ENCODE measurements at regions of chrX and their contacts with region 1.

Region 1: DNA sequence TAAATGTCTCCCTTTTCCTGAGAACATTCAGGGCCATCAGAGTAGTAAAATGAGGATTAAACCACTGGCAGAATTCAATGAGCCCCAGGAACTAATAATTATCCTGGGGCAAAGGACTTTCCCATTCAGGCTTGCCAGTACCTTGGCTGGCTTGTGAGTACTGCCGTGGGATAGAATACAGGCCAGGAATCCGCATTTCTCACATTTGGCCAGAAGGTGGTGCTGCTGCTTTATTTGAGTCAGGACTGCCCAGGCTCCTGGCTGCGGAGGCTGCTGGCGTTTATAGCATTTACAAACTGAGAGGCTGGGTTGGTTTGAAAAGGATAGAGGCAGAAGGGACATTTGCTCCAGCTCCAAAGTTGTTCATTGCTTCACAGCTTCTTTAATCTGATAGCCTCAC is 91.4 kb downstream of the RTL9 start:
- DNase-seq: peak; percentile 0 to 66 (median 44)
- ATAC-seq: peak; percentile 49
- H3K4me3 ChIP-seq: no peak overlapping the region
- H3K4me3 Mint-ChIP-seq: no peak overlapping the region
- H3K27ac ChIP-seq: no peak overlapping the region
- H3K27ac Mint-ChIP-seq: no peak overlapping the region
- H3K4me1 ChIP-seq: no peaks in the 10 kb centered on the region
- H3K4me1 Mint-ChIP-seq: no peaks in the 10 kb centered on the region
- H3K27me3 ChIP-seq: no peaks in the 10 kb centered on the region
- H3K27me3 Mint-ChIP-seq: peaks cover 4% of the 10 kb centered on the region
- CTCF ChIP-seq: peak; percentile 43

Region 2: DNA sequence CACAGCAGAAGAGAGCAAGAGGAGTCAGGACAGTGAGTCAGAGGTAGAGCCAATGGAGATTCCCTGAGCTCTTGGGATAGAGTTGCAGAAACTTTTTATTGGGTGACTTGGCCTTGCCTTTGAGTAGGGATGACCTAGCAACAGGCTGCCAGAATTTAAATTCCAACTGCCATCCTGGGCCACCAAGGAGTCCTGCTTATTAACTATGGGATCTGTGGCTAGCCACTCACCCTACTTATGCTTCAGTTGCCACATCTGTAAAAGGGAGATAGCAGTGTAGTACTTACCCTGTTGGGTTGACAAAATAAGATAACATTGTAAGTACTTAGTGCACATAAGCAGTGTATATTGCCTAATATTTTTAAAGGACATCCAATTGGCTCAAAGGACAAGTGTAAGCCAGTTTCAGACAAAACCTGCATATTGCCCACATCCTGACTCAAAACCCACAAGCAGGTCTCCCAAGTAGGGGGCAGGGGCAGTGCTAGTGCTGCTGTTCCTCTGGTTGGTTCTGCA is 490.6 kb before region 1 on chrX:
- CTCF ChIA-PET with region 1: no interaction called
- POLR2A ChIA-PET with region 1: no interaction called
- intact Hi-C with region 1: no loop called
- DNase-seq: no peak
- ATAC-seq: no peak
- H3K4me3 ChIP-seq: no peak overlapping the region
- H3K4me3 Mint-ChIP-seq: no peak overlapping the region
- H3K27ac ChIP-seq: no peak overlapping the region
- H3K27ac Mint-ChIP-seq: no peak overlapping the region
- H3K4me1 ChIP-seq: no peaks in the 10 kb centered on the region
- H3K4me1 Mint-ChIP-seq: peaks cover 7% of the 10 kb centered on the region
- H3K27me3 ChIP-seq: no peaks in the 10 kb centered on the region
- H3K27me3 Mint-ChIP-seq: no peaks in the 10 kb centered on the region
- CTCF ChIP-seq: no peak

Region 3: DNA sequence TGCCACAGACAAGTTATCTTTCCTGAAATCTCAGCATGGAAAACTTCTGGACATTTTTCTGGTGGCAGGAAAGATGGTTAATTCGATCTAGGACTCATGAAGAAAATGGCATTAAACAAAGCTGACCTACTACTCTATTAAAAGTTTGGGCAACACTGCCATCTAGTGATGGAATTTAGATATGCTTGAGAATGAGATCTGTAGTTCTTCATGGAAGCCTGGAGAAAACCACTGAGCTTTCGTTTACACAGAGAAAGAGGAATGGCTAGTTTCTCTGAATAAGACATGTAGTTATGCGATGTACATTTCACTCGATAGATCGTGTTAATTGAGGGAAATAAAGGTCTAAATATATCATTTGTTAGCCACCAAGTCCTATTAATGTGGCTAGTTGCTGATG is 397.3 kb after region 1 on chrX:
- CTCF ChIA-PET with region 1: interaction called, 7 read pairs
- POLR2A ChIA-PET with region 1: no interaction called
- intact Hi-C with region 1: loop called in 1 of 2 experiments (anchors 1 kb)
- DNase-seq: peak in 3 of 9 experiments; percentile 7 to 52 (median 44)
- ATAC-seq: no peak
- H3K4me3 ChIP-seq: no peak overlapping the region
- H3K4me3 Mint-ChIP-seq: no peak overlapping the region
- H3K27ac ChIP-seq: no peak overlapping the region
- H3K27ac Mint-ChIP-seq: no peak overlapping the region
- H3K4me1 ChIP-seq: no peaks in the 10 kb centered on the region
- H3K4me1 Mint-ChIP-seq: no peaks in the 10 kb centered on the region
- H3K27me3 ChIP-seq: no peaks in the 10 kb centered on the region
- H3K27me3 Mint-ChIP-seq: no peaks in the 10 kb centered on the region
- CTCF ChIP-seq: peak; percentile 49

Region 4: GRCh38 chrX:111100186-111100980 is 650.3 kb after region 1 on chrX:
- CTCF ChIA-PET with region 1: no interaction called
- POLR2A ChIA-PET with region 1: no interaction called
- intact Hi-C with region 1: loop called in 1 of 2 experiments (anchors 10 kb)
- DNase-seq: peak in 4 of 9 experiments; percentile 16 to 61 (median 36)
- ATAC-seq: no peak
- H3K4me3 ChIP-seq: no peak overlapping the region
- H3K4me3 Mint-ChIP-seq: no peak overlapping the region
- H3K27ac ChIP-seq: no peak overlapping the region
- H3K27ac Mint-ChIP-seq: no peak overlapping the region
- H3K4me1 ChIP-seq: no peaks in the 10 kb centered on the region
- H3K4me1 Mint-ChIP-seq: peaks cover 13% of the 10 kb centered on the region
- H3K27me3 ChIP-seq: no peaks in the 10 kb centered on the region
- H3K27me3 Mint-ChIP-seq: peaks cover 8% of the 10 kb centered on the region
- CTCF ChIP-seq: peak; percentile 31

Region 5: GRCh38 chrX:111244235-111244750 is 794.2 kb after region 1 on chrX:
- CTCF ChIA-PET with region 1: no interaction called
- POLR2A ChIA-PET with region 1: no interaction called
- intact Hi-C with region 1: loop called in 1 of 2 experiments (anchors 10 kb)
- DNase-seq: peak in 2 of 9 experiments; percentile 4 to 5
- ATAC-seq: no peak
- H3K4me3 ChIP-seq: no peak overlapping the region
- H3K4me3 Mint-ChIP-seq: no peak overlapping the region
- H3K27ac ChIP-seq: no peak overlapping the region
- H3K27ac Mint-ChIP-seq: no peak overlapping the region
- H3K4me1 ChIP-seq: no peaks in the 10 kb centered on the region
- H3K4me1 Mint-ChIP-seq: no peaks in the 10 kb centered on the region
- H3K27me3 ChIP-seq: no peaks in the 10 kb centered on the region
- H3K27me3 Mint-ChIP-seq: peaks cover 2% of the 10 kb centered on the region
- CTCF ChIP-seq: no peak

Region 6: DNA sequence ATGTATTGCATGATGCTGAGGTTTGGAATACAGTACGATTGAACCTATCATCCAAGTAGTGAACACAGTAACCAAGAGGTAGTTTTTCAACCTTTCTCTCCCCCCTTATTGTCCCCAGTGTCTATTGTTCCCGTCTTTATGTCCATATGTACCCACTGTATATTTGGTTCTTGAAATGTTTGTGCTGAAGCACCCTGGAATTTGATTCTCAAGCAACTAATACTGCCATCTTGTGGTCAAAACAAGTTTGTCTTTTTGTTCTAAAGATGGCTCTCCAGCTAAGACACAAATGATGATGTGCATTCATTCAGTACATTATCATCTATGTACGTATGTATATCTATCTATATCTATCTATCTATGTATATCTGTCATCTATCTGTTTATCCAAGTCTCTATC is 995.4 kb after region 1 on chrX:
- CTCF ChIA-PET with region 1: no interaction called
- POLR2A ChIA-PET with region 1: no interaction called
- intact Hi-C with region 1: loop called in 1 of 2 experiments (anchors 10 kb)
- DNase-seq: peak in 2 of 9 experiments; percentile 5 to 18
- ATAC-seq: no peak
- H3K4me3 ChIP-seq: no peak overlapping the region
- H3K4me3 Mint-ChIP-seq: no peak overlapping the region
- H3K27ac ChIP-seq: no peak overlapping the region
- H3K27ac Mint-ChIP-seq: no peak overlapping the region
- H3K4me1 ChIP-seq: no peaks in the 10 kb centered on the region
- H3K4me1 Mint-ChIP-seq: no peaks in the 10 kb centered on the region
- H3K27me3 ChIP-seq: no peaks in the 10 kb centered on the region
- H3K27me3 Mint-ChIP-seq: peaks cover 5% of the 10 kb centered on the region
- CTCF ChIP-seq: no peak